ENCODE measurements at regions of chr17 and their contacts with region 1.

Region 1: GRCh38 chr17:77420804-77421629 is 280.2 kb downstream of the SEC14L1 start:
- DNase-seq: no peak

Region 2: DNA sequence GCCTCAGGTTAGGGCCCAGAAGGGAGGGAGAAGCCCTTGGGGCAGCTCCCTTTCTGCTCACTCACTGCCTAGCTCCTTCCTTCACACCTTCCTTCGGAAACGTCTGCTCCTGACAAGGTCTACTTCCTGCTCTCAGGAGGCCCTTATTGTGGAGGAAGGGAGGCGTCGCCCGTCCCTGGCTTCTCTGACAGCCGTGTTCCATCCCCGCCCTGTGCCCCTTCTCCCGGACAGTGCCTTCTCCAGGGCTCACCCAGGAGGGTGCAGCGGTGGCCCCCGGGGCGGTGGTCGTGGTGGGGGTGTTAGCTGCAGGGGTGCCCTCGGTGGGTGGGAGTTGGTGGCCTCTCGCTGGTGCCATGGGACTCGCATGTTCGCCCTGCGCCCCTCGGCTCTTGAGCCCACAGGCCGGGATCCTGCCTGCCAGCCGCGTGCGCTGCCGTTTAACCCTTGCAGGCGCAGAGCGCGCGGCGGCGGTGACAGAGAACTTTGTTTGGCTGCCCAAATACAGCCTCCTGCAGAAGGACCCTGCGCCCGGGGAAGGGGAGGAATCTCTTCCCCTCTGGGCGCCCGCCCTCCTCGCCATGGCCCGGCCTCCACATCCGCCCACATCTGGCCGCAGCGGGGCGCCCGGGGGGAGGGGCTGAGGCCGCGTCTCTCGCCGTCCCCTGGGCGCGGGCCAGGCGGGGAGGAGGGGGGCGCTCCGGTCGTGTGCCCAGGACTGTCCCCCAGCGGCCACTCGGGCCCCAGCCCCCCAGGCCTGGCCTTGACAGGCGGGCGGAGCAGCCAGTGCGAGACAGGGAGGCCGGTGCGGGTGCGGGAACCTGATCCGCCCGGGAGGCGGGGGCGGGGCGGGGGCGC is 48.3 kb before region 1 on chr17:
- intact Hi-C with region 1: loop called (anchors 5 kb)
- DNase-seq: peak; percentile 94

Measured in cardiac septum (tissue), 1 donor.